OCI-LY7 (cell line): ENCODE measurements at regions of chr2 and their contacts with region 1.

Region 1: GRCh38 chr2:41024816-41025215 is 572.9 kb upstream of the SLC8A1 start:
- DNase-seq: no peak
- H3K4me3 ChIP-seq: no peak overlapping the region
- H3K27ac ChIP-seq: no peak overlapping the region
- H3K4me1 ChIP-seq: no peaks in the 10 kb centered on the region
- CTCF ChIP-seq: no peak

Region 2: GRCh38 chr2:41000374-41000773 is 24.4 kb before region 1 on chr2:
- CTCF ChIA-PET with region 1: no interaction called
- POLR2A ChIA-PET with region 1: interaction called, 10 read pairs
- intact Hi-C with region 1: no loop called
- DNase-seq: no peak
- H3K4me3 ChIP-seq: no peak overlapping the region
- H3K27ac ChIP-seq: no peak overlapping the region
- H3K4me1 ChIP-seq: no peaks in the 10 kb centered on the region
- CTCF ChIP-seq: no peak

Region 3: DNA sequence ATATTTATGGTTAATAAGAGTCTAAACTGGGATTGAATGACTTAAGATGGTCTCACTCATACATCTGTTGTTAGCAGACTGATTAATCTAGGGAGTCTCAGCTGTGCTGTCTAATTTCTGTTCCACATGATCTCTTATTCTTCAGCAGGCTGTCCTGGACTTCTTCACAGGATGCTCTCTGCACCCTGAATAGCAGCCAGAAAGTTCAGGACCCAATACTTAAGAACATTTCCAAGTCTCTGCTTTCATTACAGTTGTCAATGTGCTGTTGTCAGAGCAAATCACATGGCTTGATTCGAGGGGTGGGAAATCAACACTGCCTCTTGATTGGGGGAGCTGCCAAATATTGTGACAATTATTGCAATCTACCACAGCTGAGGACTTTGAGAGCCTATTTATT is 54.2 kb after region 1 on chr2:
- CTCF ChIA-PET with region 1: no interaction called
- POLR2A ChIA-PET with region 1: no interaction called
- intact Hi-C with region 1: no loop called
- DNase-seq: no peak
- H3K4me3 ChIP-seq: no peak overlapping the region
- H3K27ac ChIP-seq: no peak overlapping the region
- H3K4me1 ChIP-seq: no peaks in the 10 kb centered on the region
- CTCF ChIP-seq: no peak

Region 4: GRCh38 chr2:41111836-41112627 is 87.2 kb after region 1 on chr2:
- CTCF ChIA-PET with region 1: no interaction called
- POLR2A ChIA-PET with region 1: no interaction called
- intact Hi-C with region 1: no loop called
- DNase-seq: no peak
- H3K4me3 ChIP-seq: no peak overlapping the region
- H3K27ac ChIP-seq: no peak overlapping the region
- H3K4me1 ChIP-seq: no peaks in the 10 kb centered on the region
- CTCF ChIP-seq: no peak